ENCODE measurements at regions of chr14 and their contacts with region 1.

Region 1: GRCh38 chr14:94671870-94672444 is 59.8 kb downstream of the SERPINA3 start:
- DNase-seq: no peak
- ATAC-seq: peak; percentile 94
- H3K4me3 ChIP-seq: no peak overlapping the region
- H3K27ac ChIP-seq: no peak overlapping the region
- H3K4me1 ChIP-seq: no peaks in the 10 kb centered on the region
- H3K27me3 ChIP-seq: no peaks in the 10 kb centered on the region
- CTCF ChIP-seq: peak; percentile 68

Region 2: DNA sequence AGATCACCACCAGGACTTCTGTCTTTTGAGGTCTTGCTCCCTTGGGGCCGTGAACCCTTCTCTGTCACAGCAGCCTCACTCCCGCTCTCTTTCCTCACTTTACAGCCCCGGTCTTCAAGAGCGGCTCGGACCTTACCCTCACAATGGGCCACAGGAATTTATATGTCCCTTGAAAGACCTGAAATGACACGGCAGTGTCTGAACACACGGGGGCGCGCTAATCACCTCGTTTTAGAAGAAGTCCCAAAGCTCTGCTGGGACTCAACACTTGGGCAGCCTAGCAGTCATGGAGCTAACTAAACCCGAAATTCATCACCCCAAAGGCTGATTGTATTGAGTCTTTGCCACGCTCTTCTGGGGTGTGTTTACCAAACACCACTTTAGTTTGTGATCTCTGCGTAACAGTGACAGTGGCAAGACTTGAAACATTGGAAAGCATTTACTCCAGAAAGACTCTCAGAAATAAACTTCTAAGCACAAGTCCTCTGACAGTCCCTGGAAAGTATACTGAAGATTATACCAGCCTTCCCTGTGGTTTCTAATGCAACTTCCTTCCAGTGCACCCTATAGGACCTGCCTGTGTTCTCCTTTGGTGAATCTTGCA is 248.4 kb before region 1 on chr14:
- CTCF ChIA-PET with region 1: no interaction called
- POLR2A ChIA-PET with region 1: no interaction called
- in situ Hi-C with region 1: no loop called
- intact Hi-C with region 1: loop called (anchors 10 kb)
- DNase-seq: peak; percentile 10
- ATAC-seq: peak; percentile 85; the same call in 1 of the 2 replicates
- H3K4me3 ChIP-seq: peak overlapping the region in 1 of 2 experiments; percentile 26; a peak in 1 of 4 replicates
- H3K27ac ChIP-seq: no peak overlapping the region
- H3K4me1 ChIP-seq: no peaks in the 10 kb centered on the region
- H3K27me3 ChIP-seq: no peaks in the 10 kb centered on the region; the same call in 1 of the 2 replicates
- CTCF ChIP-seq: peak; percentile 82

Region 3: DNA sequence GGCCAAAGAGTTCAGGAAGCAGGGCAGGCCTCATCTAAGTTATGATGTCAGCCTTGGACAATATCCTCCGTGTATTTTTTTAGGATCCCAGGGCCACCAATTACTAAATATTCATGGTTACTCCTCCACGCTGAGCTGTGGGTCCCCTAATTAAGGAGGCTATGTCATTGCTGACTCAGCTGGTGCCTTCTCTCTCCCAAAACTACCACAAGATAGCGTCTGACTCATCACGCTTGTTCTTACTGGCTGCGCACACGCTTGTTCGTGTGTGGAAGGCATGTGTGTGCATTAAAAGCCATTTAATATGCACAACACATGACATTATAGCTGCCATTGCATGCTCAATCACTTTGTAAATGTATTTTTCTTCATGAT is 19.7 kb after region 1 on chr14:
- CTCF ChIA-PET with region 1: no interaction called
- POLR2A ChIA-PET with region 1: no interaction called
- in situ Hi-C with region 1: no loop called
- intact Hi-C with region 1: no loop called
- DNase-seq: no peak
- ATAC-seq: no peak
- H3K4me3 ChIP-seq: no peak overlapping the region
- H3K27ac ChIP-seq: no peak overlapping the region
- H3K4me1 ChIP-seq: no peaks in the 10 kb centered on the region
- H3K27me3 ChIP-seq: no peaks in the 10 kb centered on the region
- CTCF ChIP-seq: no peak

Region 4: GRCh38 chr14:94921882-94922585 is 250.1 kb after region 1 on chr14:
- CTCF ChIA-PET with region 1: no interaction called
- POLR2A ChIA-PET with region 1: no interaction called
- in situ Hi-C with region 1: no loop called
- intact Hi-C with region 1: no loop called
- DNase-seq: no peak
- ATAC-seq: no peak
- H3K4me3 ChIP-seq: no peak overlapping the region
- H3K27ac ChIP-seq: no peak overlapping the region
- H3K4me1 ChIP-seq: no peaks in the 10 kb centered on the region
- H3K27me3 ChIP-seq: no peaks in the 10 kb centered on the region
- CTCF ChIP-seq: no peak